CD4-positive, alpha-beta T cell (primary cell): ENCODE measurements at regions of chr15 and their contacts with region 1.

Region 1: GRCh38 chr15:89893696-89894455 is at the start of gene AP3S2:
- DNase-seq: peak; percentile 81 to 94 (median 85)
- ATAC-seq: peak; percentile 90
- H3K4me3 ChIP-seq: peak within 1 kb of the TSS; percentile 86
- H3K4me3 Mint-ChIP-seq: peak within 1 kb of the TSS; percentile 96
- H3K27ac ChIP-seq: peak within 1 kb of the TSS; percentile 60 to 74
- H3K27ac Mint-ChIP-seq: peak within 1 kb of the TSS; percentile 95
- H3K4me1 ChIP-seq: peaks cover 29% of the 10 kb centered on the region
- H3K4me1 Mint-ChIP-seq: peaks cover 42% of the 10 kb centered on the region
- H3K27me3 ChIP-seq: no peaks in the 10 kb centered on the region
- H3K27me3 Mint-ChIP-seq: no peaks in the 10 kb centered on the region
- CTCF ChIP-seq: no peak
- total RNA-seq, gene AP3S2: 18.9 to 20.5 TPM

Region 2: DNA sequence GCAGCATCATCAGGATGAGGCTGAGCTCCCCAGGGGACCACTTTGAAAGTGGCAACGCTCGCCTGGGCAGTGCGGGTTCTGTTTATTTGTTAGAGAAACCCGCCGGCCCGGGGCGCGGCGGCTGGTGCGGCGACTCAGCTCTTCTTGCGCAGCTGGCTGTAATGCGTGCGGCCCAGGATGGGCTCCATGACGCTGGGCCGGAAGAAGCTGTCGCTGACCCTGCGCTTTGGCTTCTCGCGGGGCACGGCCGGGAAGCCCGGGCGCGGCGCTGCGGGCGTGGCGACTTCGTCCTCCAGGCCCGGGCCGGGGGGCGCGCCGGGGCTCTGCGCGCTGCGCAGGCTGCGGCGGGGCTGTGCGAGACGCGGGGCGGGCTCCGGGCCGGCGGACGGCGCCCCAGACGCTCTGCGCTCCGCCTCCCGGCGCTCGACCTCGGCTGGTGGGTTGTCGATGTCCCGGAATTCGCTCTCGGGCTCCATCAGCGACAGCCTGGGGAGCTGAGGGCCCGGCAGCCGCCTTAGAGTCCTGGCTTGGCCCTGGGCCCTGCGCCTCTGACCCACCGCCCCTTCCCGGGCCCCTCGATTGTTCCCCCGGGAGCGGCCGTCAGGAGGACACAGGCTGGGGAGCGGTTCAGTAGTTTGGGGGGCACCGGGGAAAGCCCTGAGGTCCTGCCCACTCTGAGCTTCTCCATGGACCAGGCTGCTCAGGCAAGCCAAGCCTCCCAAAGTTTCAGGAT is 228.3 kb before region 1 on chr15:
- CTCF ChIA-PET with region 1: no interaction called
- POLR2A ChIA-PET with region 1: no interaction called
- intact Hi-C with region 1: no loop called
- DNase-seq: no peak
- ATAC-seq: no peak
- H3K4me3 ChIP-seq: no peak overlapping the region
- H3K4me3 Mint-ChIP-seq: no peak overlapping the region
- H3K27ac ChIP-seq: no peak overlapping the region
- H3K27ac Mint-ChIP-seq: no peak overlapping the region
- H3K4me1 ChIP-seq: peaks cover 3% of the 10 kb centered on the region
- H3K4me1 Mint-ChIP-seq: peaks cover 4% of the 10 kb centered on the region
- H3K27me3 ChIP-seq: peaks cover 18 to 23% of the 10 kb centered on the region in 2 experiments
- H3K27me3 Mint-ChIP-seq: peaks cover 44% of the 10 kb centered on the region
- CTCF ChIP-seq: no peak

Region 3: GRCh38 chr15:89874926-89875564 is 18.8 kb before region 1 on chr15:
- CTCF ChIA-PET with region 1: interaction called, 11 read pairs
- POLR2A ChIA-PET with region 1: interaction called, 16 read pairs
- intact Hi-C with region 1: no loop called
- DNase-seq: peak; percentile 67 to 88 (median 77)
- ATAC-seq: peak; percentile 100
- H3K4me3 ChIP-seq: no peak overlapping the region
- H3K4me3 Mint-ChIP-seq: no peak overlapping the region
- H3K27ac ChIP-seq: no peak overlapping the region
- H3K27ac Mint-ChIP-seq: no peak overlapping the region
- H3K4me1 ChIP-seq: peaks cover 5% of the 10 kb centered on the region
- H3K4me1 Mint-ChIP-seq: peaks cover 7% of the 10 kb centered on the region
- H3K27me3 ChIP-seq: no peaks in the 10 kb centered on the region
- H3K27me3 Mint-ChIP-seq: no peaks in the 10 kb centered on the region
- CTCF ChIP-seq: peak; percentile 98

Region 4: DNA sequence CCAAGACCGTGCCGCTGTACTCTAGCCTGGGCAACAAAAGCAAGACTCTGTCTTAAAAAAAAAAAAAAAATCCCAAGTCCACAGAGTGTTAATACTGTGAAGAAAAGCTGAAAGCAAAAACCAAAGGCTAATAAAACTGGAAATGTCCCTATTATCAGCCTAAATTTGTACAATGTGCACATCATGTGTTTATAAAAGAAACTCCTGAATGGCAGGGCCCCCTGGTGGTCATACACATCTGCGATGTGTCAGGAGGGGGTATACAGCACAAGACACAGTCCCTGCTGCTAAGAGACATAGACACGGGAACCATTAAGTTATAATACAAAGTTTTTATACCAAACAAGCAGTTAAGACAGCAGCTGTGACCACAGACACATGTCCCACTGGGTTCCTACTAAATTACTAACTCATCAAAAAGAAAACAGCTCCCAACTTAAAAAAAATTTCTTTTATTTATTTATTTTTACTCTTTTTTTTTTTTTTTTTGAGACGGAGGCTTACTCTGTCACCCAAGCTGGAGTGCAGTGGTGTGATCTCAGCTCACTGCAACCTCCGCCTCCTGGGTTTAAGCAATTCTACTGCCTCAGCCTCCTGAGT is 177.4 kb after region 1 on chr15:
- CTCF ChIA-PET with region 1: interaction called, 7 read pairs
- POLR2A ChIA-PET with region 1: interaction called, 5 read pairs
- intact Hi-C with region 1: loop called (anchors 1 kb)
- DNase-seq: peak; percentile 65 to 89 (median 79)
- ATAC-seq: peak; percentile 98
- H3K4me3 ChIP-seq: no peak overlapping the region
- H3K4me3 Mint-ChIP-seq: no peak overlapping the region
- H3K27ac ChIP-seq: no peak overlapping the region
- H3K27ac Mint-ChIP-seq: peak overlapping the region; percentile 69
- H3K4me1 ChIP-seq: peaks cover 9% of the 10 kb centered on the region
- H3K4me1 Mint-ChIP-seq: peaks cover 6% of the 10 kb centered on the region
- H3K27me3 ChIP-seq: no peaks in the 10 kb centered on the region
- H3K27me3 Mint-ChIP-seq: no peaks in the 10 kb centered on the region
- CTCF ChIP-seq: peak; percentile 83

Region 5: GRCh38 chr15:90101969-90102890 is 208.4 kb after region 1 on chr15 and contains the start of gene IDH2:
- CTCF ChIA-PET with region 1: interaction called, 3 read pairs
- POLR2A ChIA-PET with region 1: interaction called, 12 read pairs
- intact Hi-C with region 1: no loop called
- DNase-seq: peak; percentile 37 to 89 (median 63)
- ATAC-seq: peak; percentile 68
- H3K4me3 ChIP-seq: peak within 1 kb of the TSS; percentile 75
- H3K4me3 Mint-ChIP-seq: peak within 1 kb of the TSS; percentile 90
- H3K27ac ChIP-seq: peak within 1 kb of the TSS; percentile 84 to 86
- H3K27ac Mint-ChIP-seq: peak within 1 kb of the TSS; percentile 88
- H3K4me1 ChIP-seq: peaks cover 48% of the 10 kb centered on the region
- H3K4me1 Mint-ChIP-seq: peaks cover 58% of the 10 kb centered on the region
- H3K27me3 ChIP-seq: no peaks in the 10 kb centered on the region
- H3K27me3 Mint-ChIP-seq: no peaks in the 10 kb centered on the region
- CTCF ChIP-seq: no peak
- total RNA-seq, gene IDH2: 38.0 to 38.2 TPM